ENCODE measurements at regions of chr4 and their contacts with region 1.

Region 1: DNA sequence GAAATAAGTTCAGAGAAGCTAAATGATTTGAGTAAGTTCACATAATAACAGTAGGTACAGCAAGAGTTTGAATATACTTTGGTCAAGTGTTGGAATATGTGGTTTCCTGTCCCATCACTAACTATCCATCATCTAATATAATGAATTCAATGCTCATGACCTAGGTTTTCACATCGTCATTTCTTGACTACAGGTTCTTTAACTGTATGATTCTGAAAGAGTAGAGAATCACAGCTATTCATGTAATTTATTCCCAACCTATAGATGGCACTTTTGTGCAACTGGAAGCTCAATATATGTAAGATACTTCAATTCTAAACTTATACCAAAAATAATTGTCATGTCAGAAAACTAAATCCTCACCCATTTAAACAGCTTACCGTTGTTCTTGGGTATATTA is 53.1 kb downstream of the TIGD2 start:
- DNase-seq: no peak
- H3K4me3 Mint-ChIP-seq: no peak overlapping the region
- H3K27ac Mint-ChIP-seq: no peak overlapping the region
- H3K4me1 Mint-ChIP-seq: no peaks in the 10 kb centered on the region
- H3K27me3 Mint-ChIP-seq: peaks cover 4% of the 10 kb centered on the region

Region 2: GRCh38 chr4:89586864-89587263 is 422.5 kb after region 1 on chr4:
- CTCF ChIA-PET with region 1: no interaction called
- intact Hi-C with region 1: loop called (anchors 10 kb)
- DNase-seq: no peak
- H3K4me3 Mint-ChIP-seq: no peak overlapping the region
- H3K27ac Mint-ChIP-seq: no peak overlapping the region
- H3K4me1 Mint-ChIP-seq: no peaks in the 10 kb centered on the region
- H3K27me3 Mint-ChIP-seq: no peaks in the 10 kb centered on the region